ENCODE measurements at regions of chr9 and their contacts with region 1.

Region 1: DNA sequence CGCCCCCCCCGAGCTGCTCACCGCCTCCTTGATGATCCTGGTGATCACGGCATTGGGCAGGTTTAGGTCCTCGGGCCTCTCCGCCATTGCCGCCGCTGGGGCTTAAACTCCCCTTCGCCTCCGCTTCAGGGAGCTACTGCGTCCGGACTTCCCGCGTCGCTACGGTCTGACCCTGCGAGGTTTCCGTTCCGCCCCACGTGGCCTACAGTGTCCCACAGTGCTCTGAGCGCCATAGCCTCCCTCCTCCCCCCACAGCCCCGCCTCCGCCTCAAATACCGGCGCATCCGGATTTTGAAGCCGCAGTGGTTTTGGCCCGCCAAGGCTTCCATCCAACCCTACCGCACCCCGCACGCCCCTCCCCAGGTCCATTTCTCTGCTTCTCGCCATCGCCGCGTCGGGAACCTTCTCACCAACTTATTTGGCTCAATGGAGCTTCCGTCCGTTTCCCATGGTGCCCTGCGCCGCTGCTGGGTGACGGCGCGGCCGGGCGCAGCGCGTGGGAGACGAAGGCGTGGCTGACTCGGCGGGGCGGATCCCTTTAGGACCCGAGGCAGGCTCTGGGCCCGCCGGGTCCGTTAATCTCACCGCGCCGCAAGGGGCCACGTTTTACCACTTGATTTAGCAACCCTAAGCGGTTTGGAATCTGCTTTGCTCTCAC is at the starts of genes C9orf43 and POLE3:
- DNase-seq: peak; percentile 98
- ATAC-seq: peak; percentile 89
- H3K4me3 ChIP-seq: peak within 1 kb of the TSS; percentile 74 to 100 (median 97)
- H3K4me3 Mint-ChIP-seq: peak within 1 kb of the TSS; percentile 100
- H3K27ac ChIP-seq: peak within 1 kb of the TSS; percentile 92 to 97
- H3K27ac Mint-ChIP-seq: peak within 1 kb of the TSS; percentile 100
- H3K4me1 ChIP-seq: peaks cover 8 to 17% of the 10 kb centered on the region in 2 donors
- H3K4me1 Mint-ChIP-seq: peaks cover 32% of the 10 kb centered on the region
- H3K27me3 ChIP-seq: no peaks in the 10 kb centered on the region
- H3K27me3 Mint-ChIP-seq: no peaks in the 10 kb centered on the region
- CTCF ChIP-seq: peak; percentile 14
- total RNA-seq, gene C9orf43: 0.58 and 1.7 TPM in 2 replicates
- total RNA-seq, gene POLE3: 46.1 and 50.3 TPM in 2 replicates

Region 2: GRCh38 chr9:113150670-113151611 is 259.4 kb before region 1 on chr9 and contains the start of gene SLC31A2:
- CTCF ChIA-PET with region 1: no interaction called
- POLR2A ChIA-PET with region 1: no interaction called
- intact Hi-C with region 1: loop called (anchors 10 kb)
- DNase-seq: peak; percentile 85
- ATAC-seq: peak; percentile 93
- H3K4me3 ChIP-seq: peak within 1 kb of the TSS; percentile 73 to 83 (median 76)
- H3K4me3 Mint-ChIP-seq: peak within 1 kb of the TSS; percentile 88
- H3K27ac ChIP-seq: peak within 1 kb of the TSS in 1 of 2 donors; percentile 25
- H3K27ac Mint-ChIP-seq: peak within 1 kb of the TSS; percentile 50
- H3K4me1 ChIP-seq: peaks cover 0 to 19% of the 10 kb centered on the region in 2 donors
- H3K4me1 Mint-ChIP-seq: peaks cover 11% of the 10 kb centered on the region
- H3K27me3 ChIP-seq: no peaks in the 10 kb centered on the region
- H3K27me3 Mint-ChIP-seq: peaks cover 2% of the 10 kb centered on the region
- CTCF ChIP-seq: peak; percentile 56
- total RNA-seq, gene SLC31A2: 2.3 and 3.0 TPM in 2 replicates

Region 3: DNA sequence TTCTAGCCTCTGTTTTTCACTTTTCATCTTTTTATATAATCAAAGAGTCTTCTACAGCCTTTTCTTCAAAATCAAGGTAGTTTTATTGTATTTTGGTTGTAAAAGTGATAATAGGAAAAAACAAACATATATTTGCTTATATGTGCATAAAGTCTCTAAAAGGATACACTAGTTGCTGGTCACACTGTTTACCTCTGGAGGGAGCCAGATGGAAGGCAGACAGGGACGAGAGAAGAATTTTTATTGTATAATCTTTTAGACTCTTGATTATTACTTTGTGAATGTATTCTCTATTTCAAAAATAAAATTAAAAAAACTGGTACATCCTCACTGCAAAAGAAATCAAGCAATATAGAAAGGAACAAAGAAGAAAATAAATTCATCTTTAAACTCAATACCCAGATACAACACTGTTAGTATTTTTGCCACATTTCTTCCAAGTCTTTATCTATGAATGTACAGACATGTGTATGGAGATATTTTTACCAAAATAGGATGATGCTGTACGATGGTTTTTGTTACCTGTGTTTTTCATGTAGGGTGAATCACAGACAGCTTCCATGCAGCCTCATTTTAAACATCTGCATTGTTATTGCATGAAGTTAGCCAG is 101.0 kb before region 1 on chr9:
- CTCF ChIA-PET with region 1: interaction called, 34 read pairs
- POLR2A ChIA-PET with region 1: no interaction called
- intact Hi-C with region 1: loop called (anchors 1 kb)
- DNase-seq: peak; percentile 39
- ATAC-seq: no peak
- H3K4me3 ChIP-seq: no peak overlapping the region
- H3K4me3 Mint-ChIP-seq: no peak overlapping the region
- H3K27ac ChIP-seq: no peak overlapping the region
- H3K27ac Mint-ChIP-seq: no peak overlapping the region
- H3K4me1 ChIP-seq: no peaks in the 10 kb centered on the region
- H3K4me1 Mint-ChIP-seq: no peaks in the 10 kb centered on the region
- H3K27me3 ChIP-seq: no peaks in the 10 kb centered on the region
- H3K27me3 Mint-ChIP-seq: peaks cover 4% of the 10 kb centered on the region
- CTCF ChIP-seq: peak; percentile 67

Region 4: GRCh38 chr9:113376634-113377567 is 33.4 kb before region 1 on chr9 and contains the start of gene HDHD3:
- CTCF ChIA-PET with region 1: interaction called, 5 read pairs
- POLR2A ChIA-PET with region 1: interaction called, 11 read pairs
- intact Hi-C with region 1: loop called (anchors 1 kb)
- DNase-seq: peak; percentile 89
- ATAC-seq: peak; percentile 92
- H3K4me3 ChIP-seq: peak within 1 kb of the TSS; percentile 51 to 98 (median 87)
- H3K4me3 Mint-ChIP-seq: peak within 1 kb of the TSS; percentile 96
- H3K27ac ChIP-seq: peak within 1 kb of the TSS; percentile 56 to 78
- H3K27ac Mint-ChIP-seq: peak within 1 kb of the TSS; percentile 87
- H3K4me1 ChIP-seq: peaks cover 7 to 21% of the 10 kb centered on the region in 2 donors
- H3K4me1 Mint-ChIP-seq: peaks cover 24% of the 10 kb centered on the region
- H3K27me3 ChIP-seq: no peaks in the 10 kb centered on the region
- H3K27me3 Mint-ChIP-seq: no peaks in the 10 kb centered on the region
- CTCF ChIP-seq: no peak
- total RNA-seq, gene HDHD3: 26.2 and 29.6 TPM in 2 replicates

Region 5: GRCh38 chr9:113591001-113591898 is 180.9 kb after region 1 on chr9:
- CTCF ChIA-PET with region 1: interaction called, 10 read pairs
- POLR2A ChIA-PET with region 1: no interaction called
- intact Hi-C with region 1: no loop called
- DNase-seq: peak; percentile 75
- ATAC-seq: peak; percentile 67
- H3K4me3 ChIP-seq: no peak overlapping the region
- H3K4me3 Mint-ChIP-seq: no peak overlapping the region
- H3K27ac ChIP-seq: no peak overlapping the region
- H3K27ac Mint-ChIP-seq: no peak overlapping the region
- H3K4me1 ChIP-seq: peaks cover 12 to 17% of the 10 kb centered on the region in 2 donors
- H3K4me1 Mint-ChIP-seq: peaks cover 16% of the 10 kb centered on the region
- H3K27me3 ChIP-seq: no peaks in the 10 kb centered on the region
- H3K27me3 Mint-ChIP-seq: no peaks in the 10 kb centered on the region
- CTCF ChIP-seq: peak; percentile 85